Vagina (tissue), 2 donors: ENCODE measurements at regions of chr1 and their contacts with region 1.

Region 1: GRCh38 chr1:8374812-8375211 is 56.9 kb downstream of the SLC45A1 start:
- DNase-seq: no peak
- H3K4me3 ChIP-seq: no peak overlapping the region
- H3K27ac ChIP-seq: peak overlapping the region; percentile 82
- H3K4me1 ChIP-seq: peaks cover 78% of the 10 kb centered on the region
- H3K27me3 ChIP-seq: no peaks in the 10 kb centered on the region
- CTCF ChIP-seq: no peak
- POLR2A ChIP-seq: no peak

Region 2: DNA sequence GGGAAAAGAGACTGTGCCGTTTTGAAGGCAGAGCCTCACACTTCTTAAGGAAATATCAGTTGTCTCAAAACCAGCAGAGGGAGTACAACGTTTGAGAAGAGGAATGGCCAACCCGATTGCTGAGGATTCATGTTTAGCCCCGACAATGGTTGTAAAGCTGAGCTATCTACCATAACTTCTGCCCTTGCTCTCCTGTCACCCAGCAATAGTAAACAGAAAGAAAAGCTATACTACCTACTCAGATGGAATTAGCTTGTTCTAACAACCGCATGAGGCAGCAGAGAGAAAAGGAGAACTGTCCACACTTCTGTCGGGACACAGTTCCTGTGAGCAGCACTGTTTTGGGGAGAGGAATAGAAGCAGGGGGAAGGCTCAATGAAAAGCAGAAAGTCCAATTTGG is 34.3 kb after region 1 on chr1:
- intact Hi-C with region 1: loop called (anchors 5 kb)
- DNase-seq: no peak
- H3K4me3 ChIP-seq: no peak overlapping the region
- H3K27ac ChIP-seq: peak overlapping the region; percentile 99
- H3K4me1 ChIP-seq: peaks cover 82% of the 10 kb centered on the region
- H3K27me3 ChIP-seq: no peaks in the 10 kb centered on the region
- CTCF ChIP-seq: peak in 2 of 3 experiments; percentile 10 to 34
- POLR2A ChIP-seq: no peak